ENCODE measurements at regions of chr16 and their contacts with region 1.

Region 1: GRCh38 chr16:2033057-2033908 is 6.6 kb downstream of the NHERF2 start:
- DNase-seq: peak; percentile 37
- H3K4me3 ChIP-seq: no peak overlapping the region
- H3K27ac ChIP-seq: no peak overlapping the region
- H3K4me1 ChIP-seq: peaks cover 28% of the 10 kb centered on the region
- H3K27me3 ChIP-seq: no peaks in the 10 kb centered on the region
- CTCF ChIP-seq: no peak

Region 2: DNA sequence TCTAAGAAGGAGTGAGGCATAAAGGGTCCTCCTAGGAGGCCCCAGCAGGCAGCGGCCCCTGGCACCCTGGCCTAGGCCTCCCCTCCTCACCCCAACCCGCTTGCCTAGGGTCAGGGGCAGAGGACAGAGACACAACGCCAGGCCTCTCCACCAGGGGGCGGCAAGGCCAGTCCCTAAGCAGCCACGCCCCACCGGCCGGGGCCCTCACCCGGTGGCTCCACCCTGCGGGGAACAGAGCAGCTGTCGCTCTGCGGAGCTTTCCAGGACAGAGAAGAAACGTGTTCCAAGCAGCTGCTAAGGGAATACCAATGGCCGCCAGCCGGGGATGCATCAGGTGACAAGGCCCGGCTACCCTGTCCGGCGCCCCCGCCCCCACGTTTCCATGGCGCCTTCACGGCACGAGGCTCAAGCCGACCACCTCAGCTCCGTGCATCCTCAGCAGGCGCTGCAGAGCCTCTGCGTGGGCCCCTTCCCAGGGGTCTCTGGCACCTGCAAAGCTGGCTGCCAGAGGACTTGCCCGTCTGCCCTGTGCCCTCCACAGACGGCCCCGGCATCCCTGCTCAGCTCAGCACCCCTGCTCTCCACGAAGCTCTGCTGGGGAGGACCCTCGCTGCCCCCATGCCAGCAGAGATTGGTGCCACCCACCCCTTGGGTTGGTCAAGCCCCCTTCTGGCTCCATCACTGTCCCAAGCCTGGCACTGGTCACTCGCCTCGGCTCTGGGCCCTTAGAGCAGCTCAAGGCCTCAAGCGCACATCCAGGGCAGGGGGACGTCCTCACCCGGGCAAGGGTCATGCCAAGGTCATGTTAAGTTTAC is 29.2 kb before region 1 on chr16:
- CTCF ChIA-PET with region 1: no interaction called
- dilution Hi-C with region 1: loop called (anchors 5 kb)
- in situ Hi-C with region 1: no loop called
- intact Hi-C with region 1: no loop called
- DNase-seq: peak; percentile 66
- H3K4me3 ChIP-seq: no peak overlapping the region
- H3K27ac ChIP-seq: no peak overlapping the region
- H3K4me1 ChIP-seq: peaks cover 38% of the 10 kb centered on the region
- H3K27me3 ChIP-seq: no peaks in the 10 kb centered on the region
- CTCF ChIP-seq: peak; percentile 73 to 88

Region 3: GRCh38 chr16:2071454-2072202 is 38.3 kb after region 1 on chr16:
- CTCF ChIA-PET with region 1: no interaction called
- dilution Hi-C with region 1: loop called (anchors 5 kb)
- in situ Hi-C with region 1: no loop called
- intact Hi-C with region 1: no loop called
- DNase-seq: no peak
- H3K4me3 ChIP-seq: no peak overlapping the region
- H3K27ac ChIP-seq: no peak overlapping the region
- H3K4me1 ChIP-seq: no peaks in the 10 kb centered on the region
- H3K27me3 ChIP-seq: no peaks in the 10 kb centered on the region
- CTCF ChIP-seq: no peak

Region 4: DNA sequence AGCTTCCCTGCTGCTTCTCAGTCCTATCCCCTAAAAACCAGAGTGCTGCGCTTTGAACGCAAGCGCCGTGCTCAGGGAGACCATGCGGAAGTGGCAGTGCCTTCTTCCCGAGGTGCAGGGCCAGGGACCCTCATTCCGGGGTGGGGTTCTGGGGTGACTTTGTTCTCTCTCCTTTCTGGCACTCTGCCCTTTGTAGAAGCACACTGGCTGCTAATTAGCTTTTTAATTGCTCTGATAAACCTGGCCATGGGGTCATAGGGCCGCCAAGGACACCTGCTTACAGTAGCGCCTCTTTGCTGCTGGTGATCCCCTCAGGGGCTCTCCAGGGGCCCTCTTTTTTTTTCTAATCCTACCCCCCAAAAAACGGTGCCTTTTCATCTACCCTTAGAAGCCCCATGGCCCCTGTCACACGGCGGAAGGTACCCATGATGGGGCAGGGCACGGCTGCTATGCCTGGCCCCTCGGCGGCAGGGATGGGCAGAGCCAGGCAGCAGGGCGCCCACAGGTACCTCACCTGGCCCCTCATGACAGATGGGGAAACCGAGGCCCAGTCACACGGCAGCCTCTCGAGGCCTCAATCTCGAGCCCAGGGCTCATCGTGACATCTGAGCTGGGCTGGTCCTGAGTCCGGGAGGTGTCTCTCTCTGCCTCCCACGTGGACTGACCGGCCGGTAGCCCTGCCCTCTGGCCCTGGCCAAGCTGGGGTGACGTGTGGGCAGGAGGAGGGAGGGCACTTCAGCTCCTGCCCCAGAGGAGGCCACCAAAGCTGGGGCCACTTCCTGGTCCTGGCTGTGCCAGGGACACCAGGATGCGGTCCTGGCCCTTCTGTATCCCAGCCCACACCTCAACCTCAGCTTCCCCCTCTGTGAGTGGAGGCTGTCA is 133.7 kb after region 1 on chr16:
- CTCF ChIA-PET with region 1: no interaction called
- dilution Hi-C with region 1: loop called (anchors 5 kb)
- in situ Hi-C with region 1: no loop called
- intact Hi-C with region 1: no loop called
- DNase-seq: no peak
- H3K4me3 ChIP-seq: no peak overlapping the region
- H3K27ac ChIP-seq: no peak overlapping the region
- H3K4me1 ChIP-seq: peaks cover 42% of the 10 kb centered on the region
- H3K27me3 ChIP-seq: no peaks in the 10 kb centered on the region
- CTCF ChIP-seq: no peak

Region 5: DNA sequence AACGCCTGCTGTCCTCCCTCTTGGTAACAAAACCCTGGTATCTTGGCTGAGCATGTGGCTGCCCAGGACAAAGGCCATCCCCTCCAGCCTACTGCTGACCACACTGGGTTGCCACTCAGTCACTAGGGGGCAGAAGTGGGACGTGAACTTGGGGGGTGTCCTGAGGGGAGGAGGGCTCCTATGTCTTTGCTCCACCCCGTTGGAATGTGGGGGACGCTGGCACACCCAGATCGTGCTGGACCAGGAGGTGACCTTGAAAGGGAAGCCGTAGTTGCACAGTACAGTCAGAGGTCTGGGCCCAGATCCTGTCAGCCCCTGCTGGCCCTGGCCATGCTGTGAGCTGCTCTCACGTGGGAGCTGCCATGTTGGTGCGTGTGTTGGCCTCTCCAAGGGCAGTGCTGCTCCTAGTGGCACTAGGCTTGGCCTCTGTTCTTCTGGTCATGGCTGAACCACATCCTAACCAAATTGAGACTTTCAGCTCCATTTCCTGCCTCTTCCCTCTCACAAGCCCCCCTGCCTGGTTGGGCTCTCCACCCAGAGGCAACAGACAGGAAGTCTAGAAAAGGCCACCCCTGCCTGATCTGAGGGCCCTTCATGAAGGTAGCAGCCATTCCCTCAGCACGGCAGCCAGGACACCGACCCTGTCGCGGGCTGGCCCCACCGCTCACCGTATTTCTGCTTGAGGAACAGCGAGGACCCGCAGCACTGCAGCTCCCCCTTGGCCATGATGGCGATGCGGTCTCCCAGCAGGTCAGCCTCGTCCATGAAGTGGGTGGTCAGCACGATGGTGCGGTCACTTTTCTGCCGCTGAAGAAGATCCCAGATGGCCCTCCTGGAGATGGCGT is 263.6 kb after region 1 on chr16:
- CTCF ChIA-PET with region 1: no interaction called
- dilution Hi-C with region 1: no loop called
- in situ Hi-C with region 1: no loop called
- intact Hi-C with region 1: no loop called
- DNase-seq: no peak
- H3K4me3 ChIP-seq: no peak overlapping the region
- H3K27ac ChIP-seq: no peak overlapping the region
- H3K4me1 ChIP-seq: no peaks in the 10 kb centered on the region
- H3K27me3 ChIP-seq: no peaks in the 10 kb centered on the region
- CTCF ChIP-seq: peak; percentile 29 to 58

Region 6: GRCh38 chr16:2429034-2429770 is 395.9 kb after region 1 on chr16 and contains the start of gene CCNF:
- CTCF ChIA-PET with region 1: no interaction called
- dilution Hi-C with region 1: loop called (anchors 10 kb)
- in situ Hi-C with region 1: no loop called
- intact Hi-C with region 1: no loop called
- DNase-seq: peak; percentile 92
- H3K4me3 ChIP-seq: peak within 1 kb of the TSS; percentile 72 to 87 (median 86)
- H3K27ac ChIP-seq: peak within 1 kb of the TSS; percentile 46
- H3K4me1 ChIP-seq: peaks cover 18% of the 10 kb centered on the region
- H3K27me3 ChIP-seq: no peaks in the 10 kb centered on the region
- CTCF ChIP-seq: no peak
- total RNA-seq, gene CCNF: 5.7 to 22.7 TPM